ENCODE measurements at regions of chr9 and their contacts with region 1.

Region 1: DNA sequence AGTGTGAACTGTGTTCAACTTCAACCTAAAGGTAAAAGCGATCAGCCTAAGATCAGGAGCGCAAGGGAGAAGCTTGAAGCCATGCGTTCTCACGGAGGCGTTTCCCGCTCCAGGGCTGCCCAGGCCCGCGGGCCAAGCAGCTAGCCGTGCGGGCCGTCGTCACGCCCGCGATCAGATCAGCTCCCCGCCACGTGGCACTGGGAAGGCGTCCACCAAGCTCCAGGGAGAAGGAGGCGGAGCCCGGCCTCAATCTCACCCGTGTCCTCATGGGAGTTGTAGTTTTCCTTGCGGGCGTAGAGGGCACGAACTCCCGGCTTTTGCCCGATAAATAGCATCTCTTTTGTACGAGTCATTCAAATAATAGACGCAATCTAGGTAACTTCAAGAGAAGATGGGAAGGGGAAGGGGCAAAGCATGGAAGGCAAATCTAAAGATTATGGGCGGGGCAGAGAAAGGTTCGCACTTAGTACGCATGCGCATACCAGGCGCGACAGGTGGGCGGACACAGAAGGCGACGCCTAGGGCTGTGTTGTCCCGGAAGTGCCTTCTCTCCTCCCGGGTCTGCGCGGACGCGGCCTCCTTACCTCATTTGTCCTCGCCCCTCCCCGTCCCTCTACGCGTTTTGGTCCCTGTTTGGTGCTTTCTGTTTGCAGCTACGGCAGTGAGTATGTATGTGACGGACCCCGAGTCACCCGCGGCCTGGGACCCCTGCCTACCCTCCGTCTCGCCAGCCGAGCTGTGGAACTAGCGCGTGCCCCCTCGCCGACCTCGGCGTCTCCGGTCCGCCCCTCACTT is 40.8 kb upstream of the ZCCHC7 start:
- DNase-seq: peak; percentile 92 to 97 (median 95)
- H3K4me3 ChIP-seq: peak overlapping the region; percentile 85 to 92
- H3K4me3 Mint-ChIP-seq: peak overlapping the region; percentile 89 to 98 (median 96)
- H3K27ac ChIP-seq: peak overlapping the region; percentile 98
- H3K27ac Mint-ChIP-seq: peak overlapping the region; percentile 95 to 99 (median 98)
- H3K4me1 ChIP-seq: peaks cover 48% of the 10 kb centered on the region
- H3K4me1 Mint-ChIP-seq: peaks cover 22 to 58% (median 44%) of the 10 kb centered on the region in 4 donors
- H3K27me3 ChIP-seq: no peaks in the 10 kb centered on the region
- H3K27me3 Mint-ChIP-seq: peaks cover 0 to 7% of the 10 kb centered on the region in 2 donors

Region 2: DNA sequence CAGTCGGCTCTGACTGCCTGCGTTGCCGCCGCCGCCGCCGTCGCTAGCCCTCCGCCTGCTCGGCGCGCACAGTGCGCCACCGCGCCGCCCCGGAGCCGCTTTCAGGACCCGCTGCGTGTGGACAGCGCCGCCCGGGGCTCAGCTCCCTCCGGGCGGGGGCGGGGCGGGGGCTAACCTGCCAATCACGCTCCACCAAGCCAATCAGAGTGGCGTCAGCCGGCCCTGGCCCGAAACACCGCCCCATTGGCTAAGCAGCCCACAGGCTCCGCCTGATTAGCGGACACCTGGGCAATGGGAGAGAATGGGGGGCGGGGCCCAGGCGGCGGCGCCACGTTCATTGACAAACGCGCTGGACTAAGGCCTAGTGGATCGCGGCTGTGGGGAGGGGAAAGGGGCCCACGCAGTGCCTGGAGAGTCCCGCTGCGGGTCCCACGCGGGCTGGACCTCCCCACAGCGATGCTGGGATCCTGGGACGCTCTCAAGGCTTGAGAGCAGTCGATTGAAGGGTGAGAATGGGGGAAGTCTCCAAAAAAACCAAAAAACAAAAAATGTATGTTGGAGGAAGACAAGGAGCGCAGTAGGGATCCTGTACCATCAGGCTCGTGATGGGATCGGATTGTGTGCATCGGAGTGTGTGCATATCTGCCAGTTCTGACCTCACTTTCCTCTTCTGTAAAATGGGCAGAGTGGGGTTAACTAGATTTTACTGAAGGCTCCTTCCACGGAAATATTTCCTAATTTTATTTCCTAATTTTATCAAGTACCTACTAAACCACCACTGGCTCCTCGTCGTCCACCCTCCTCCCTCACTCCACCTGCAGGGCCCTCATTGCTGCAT is 51.8 kb before region 1 on chr9:
- CTCF ChIA-PET with region 1: no interaction called
- POLR2A ChIA-PET with region 1: interaction called, 3 read pairs
- intact Hi-C with region 1: loop called (anchors 2 kb)
- DNase-seq: peak; percentile 78 to 85 (median 81)
- H3K4me3 ChIP-seq: peak overlapping the region in 1 of 2 donors; percentile 52
- H3K4me3 Mint-ChIP-seq: peak overlapping the region in 7 of 8 donors; percentile 40 to 69 (median 51)
- H3K27ac ChIP-seq: no peak overlapping the region
- H3K27ac Mint-ChIP-seq: peak overlapping the region in 2 of 7 donors; percentile 63 to 85
- H3K4me1 ChIP-seq: peaks cover 59% of the 10 kb centered on the region
- H3K4me1 Mint-ChIP-seq: peaks cover 16 to 55% (median 38%) of the 10 kb centered on the region in 4 donors
- H3K27me3 ChIP-seq: peaks cover 78% of the 10 kb centered on the region
- H3K27me3 Mint-ChIP-seq: peaks cover 62 to 73% of the 10 kb centered on the region in 2 donors

Region 3: GRCh38 chr9:37036776-37037502 is 42.6 kb before region 1 on chr9:
- CTCF ChIA-PET with region 1: interaction called, 3 read pairs
- POLR2A ChIA-PET with region 1: interaction called, 7 read pairs
- intact Hi-C with region 1: loop called (anchors 1 kb)
- DNase-seq: peak in 4 of 5 donors; percentile 47 to 55 (median 54)
- H3K4me3 ChIP-seq: peak overlapping the region; percentile 69 to 74
- H3K4me3 Mint-ChIP-seq: peak overlapping the region; percentile 84 to 94 (median 90)
- H3K27ac ChIP-seq: no peak overlapping the region
- H3K27ac Mint-ChIP-seq: peak overlapping the region in 5 of 7 donors; percentile 5 to 86 (median 28)
- H3K4me1 ChIP-seq: peaks cover 47% of the 10 kb centered on the region
- H3K4me1 Mint-ChIP-seq: peaks cover 18 to 48% (median 30%) of the 10 kb centered on the region in 4 donors
- H3K27me3 ChIP-seq: peaks cover 63% of the 10 kb centered on the region
- H3K27me3 Mint-ChIP-seq: peaks cover 54 to 66% of the 10 kb centered on the region in 2 donors

Region 4: GRCh38 chr9:37107701-37108100 is 28.1 kb after region 1 on chr9:
- CTCF ChIA-PET with region 1: no interaction called
- POLR2A ChIA-PET with region 1: interaction called, 14 read pairs
- intact Hi-C with region 1: no loop called
- DNase-seq: peak in 3 of 5 donors; percentile 8 to 18 (median 11)
- H3K4me3 ChIP-seq: peak overlapping the region; percentile 4 to 32
- H3K4me3 Mint-ChIP-seq: peak overlapping the region; percentile 64 to 86 (median 80)
- H3K27ac ChIP-seq: no peak overlapping the region
- H3K27ac Mint-ChIP-seq: peak overlapping the region in 6 of 7 donors; percentile 38 to 84 (median 74)
- H3K4me1 ChIP-seq: peaks cover 18% of the 10 kb centered on the region
- H3K4me1 Mint-ChIP-seq: peaks cover 14 to 25% (median 20%) of the 10 kb centered on the region in 4 donors
- H3K27me3 ChIP-seq: no peaks in the 10 kb centered on the region
- H3K27me3 Mint-ChIP-seq: peaks cover 3 to 5% of the 10 kb centered on the region in 2 donors

Region 5: DNA sequence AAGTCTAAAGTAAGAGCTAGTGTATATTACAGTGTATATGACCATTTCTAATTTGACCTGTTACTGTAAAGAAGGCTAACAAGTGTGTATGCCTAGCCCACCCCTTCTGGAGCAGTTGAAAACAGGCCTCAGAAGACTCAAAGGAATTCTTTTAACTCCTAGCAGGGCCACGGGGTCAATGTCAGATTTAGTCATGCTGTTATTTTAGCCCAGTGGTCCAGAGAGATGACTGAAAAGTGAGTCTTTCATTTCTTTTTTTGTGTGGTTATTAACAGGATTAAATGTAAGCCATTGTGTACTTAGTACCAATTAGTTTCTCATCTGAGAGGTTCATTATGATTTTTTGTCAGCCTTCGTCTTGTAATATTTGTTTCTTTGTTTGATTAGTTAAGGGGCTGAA is 65.2 kb after region 1 on chr9:
- CTCF ChIA-PET with region 1: no interaction called
- POLR2A ChIA-PET with region 1: interaction called, 20 read pairs
- intact Hi-C with region 1: loop called (anchors 2 kb)
- DNase-seq: no peak
- H3K4me3 ChIP-seq: no peak overlapping the region
- H3K4me3 Mint-ChIP-seq: peak overlapping the region in 3 of 8 donors; percentile 28 to 66 (median 36)
- H3K27ac ChIP-seq: no peak overlapping the region
- H3K27ac Mint-ChIP-seq: peak overlapping the region; percentile 58 to 90 (median 78)
- H3K4me1 ChIP-seq: peaks cover 50% of the 10 kb centered on the region
- H3K4me1 Mint-ChIP-seq: peaks cover 29 to 48% (median 40%) of the 10 kb centered on the region in 4 donors
- H3K27me3 ChIP-seq: no peaks in the 10 kb centered on the region
- H3K27me3 Mint-ChIP-seq: no peaks in the 10 kb centered on the region

Region 6: GRCh38 chr9:37302277-37302676 is 222.7 kb after region 1 on chr9:
- CTCF ChIA-PET with region 1: no interaction called
- POLR2A ChIA-PET with region 1: interaction called, 3 read pairs
- intact Hi-C with region 1: loop called (anchors 5 kb)
- DNase-seq: peak; percentile 52 to 71 (median 64)
- H3K4me3 ChIP-seq: peak overlapping the region in 1 of 2 donors; percentile 20
- H3K4me3 Mint-ChIP-seq: peak overlapping the region; percentile 1 to 88 (median 70)
- H3K27ac ChIP-seq: no peak overlapping the region
- H3K27ac Mint-ChIP-seq: peak overlapping the region in 5 of 7 donors; percentile 2 to 79 (median 58)
- H3K4me1 ChIP-seq: peaks cover 37% of the 10 kb centered on the region
- H3K4me1 Mint-ChIP-seq: peaks cover 36 to 52% (median 40%) of the 10 kb centered on the region in 4 donors
- H3K27me3 ChIP-seq: no peaks in the 10 kb centered on the region
- H3K27me3 Mint-ChIP-seq: no peaks in the 10 kb centered on the region

Region 7: GRCh38 chr9:37446401-37446800 is 366.8 kb after region 1 on chr9:
- CTCF ChIA-PET with region 1: no interaction called
- POLR2A ChIA-PET with region 1: no interaction called
- intact Hi-C with region 1: no loop called
- DNase-seq: no peak
- H3K4me3 ChIP-seq: no peak overlapping the region
- H3K4me3 Mint-ChIP-seq: no peak overlapping the region
- H3K27ac ChIP-seq: no peak overlapping the region
- H3K27ac Mint-ChIP-seq: peak overlapping the region in 3 of 7 donors; percentile 40 to 74 (median 69)
- H3K4me1 ChIP-seq: no peaks in the 10 kb centered on the region
- H3K4me1 Mint-ChIP-seq: peaks cover 7 to 23% (median 11%) of the 10 kb centered on the region in 4 donors
- H3K27me3 ChIP-seq: no peaks in the 10 kb centered on the region
- H3K27me3 Mint-ChIP-seq: no peaks in the 10 kb centered on the region

Region 8: GRCh38 chr9:37520641-37521040 is 441.1 kb after region 1 on chr9:
- CTCF ChIA-PET with region 1: no interaction called
- POLR2A ChIA-PET with region 1: no interaction called
- intact Hi-C with region 1: no loop called
- DNase-seq: no peak
- H3K4me3 ChIP-seq: no peak overlapping the region
- H3K4me3 Mint-ChIP-seq: no peak overlapping the region
- H3K27ac ChIP-seq: no peak overlapping the region
- H3K27ac Mint-ChIP-seq: peak overlapping the region in 3 of 7 donors; percentile 45 to 67 (median 57)
- H3K4me1 ChIP-seq: no peaks in the 10 kb centered on the region
- H3K4me1 Mint-ChIP-seq: no peaks in the 10 kb centered on the region
- H3K27me3 ChIP-seq: no peaks in the 10 kb centered on the region
- H3K27me3 Mint-ChIP-seq: no peaks in the 10 kb centered on the region

Measured in CD4-positive, alpha-beta memory T cell (primary cell).